ENCODE measurements at regions of chr12 and their contacts with region 1.

Region 1: GRCh38 chr12:20272801-20273200 is 95.5 kb upstream of the PDE3A start:
- DNase-seq: no peak
- ATAC-seq: peak; percentile 74

Region 2: GRCh38 chr12:19847294-19848059 is 425.3 kb before region 1 on chr12:
- intact Hi-C with region 1: loop called (anchors 5 kb)
- DNase-seq: no peak
- ATAC-seq: peak; percentile 91

Region 3: DNA sequence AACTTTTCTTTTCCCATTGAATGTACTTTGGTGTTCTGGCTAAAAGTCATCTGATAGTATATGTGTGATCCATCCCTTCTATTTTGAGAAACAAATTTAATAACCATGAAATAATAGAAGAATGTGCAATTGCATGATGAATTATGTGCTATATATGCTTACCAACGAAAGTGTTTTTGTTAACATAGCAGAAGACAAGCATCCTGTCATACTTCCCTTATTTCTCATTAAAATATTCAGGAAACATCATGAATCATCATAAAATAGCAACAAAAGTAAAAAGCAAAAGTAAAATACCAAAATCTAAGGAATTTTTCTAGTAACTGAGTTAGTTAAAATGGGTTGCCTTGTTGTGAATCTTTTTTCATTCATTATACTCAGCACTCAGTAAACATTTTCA is 313.4 kb before region 1 on chr12:
- intact Hi-C with region 1: loop called (anchors 10 kb)
- DNase-seq: no peak
- ATAC-seq: no peak

Region 4: GRCh38 chr12:20044846-20045245 is 228.0 kb before region 1 on chr12:
- intact Hi-C with region 1: loop called (anchors 5 kb)
- DNase-seq: no peak
- ATAC-seq: peak; percentile 86

Region 5: DNA sequence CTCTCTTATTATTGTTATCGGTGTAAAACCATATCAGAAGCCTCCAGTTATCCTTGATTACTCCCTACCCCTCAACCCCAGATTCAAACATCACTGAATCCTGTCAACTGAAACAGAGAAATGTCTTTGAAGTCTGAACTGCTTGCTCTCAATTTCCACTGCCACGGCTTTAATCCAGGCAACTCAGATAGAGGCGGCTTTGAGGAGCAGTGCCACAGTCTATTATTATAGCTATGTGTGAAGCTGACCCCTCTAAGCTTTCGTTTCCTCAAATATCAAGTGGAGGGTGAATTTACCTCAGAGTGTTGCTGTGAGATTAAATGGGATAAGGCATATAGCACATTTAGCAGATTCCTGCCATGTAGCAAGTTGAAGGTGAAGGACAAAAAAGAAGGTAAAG is 46.6 kb after region 1 on chr12:
- intact Hi-C with region 1: loop called (anchors 5 kb)
- DNase-seq: no peak
- ATAC-seq: peak; percentile 68